ENCODE measurements at regions of chr9 and their contacts with region 1.

Region 1: DNA sequence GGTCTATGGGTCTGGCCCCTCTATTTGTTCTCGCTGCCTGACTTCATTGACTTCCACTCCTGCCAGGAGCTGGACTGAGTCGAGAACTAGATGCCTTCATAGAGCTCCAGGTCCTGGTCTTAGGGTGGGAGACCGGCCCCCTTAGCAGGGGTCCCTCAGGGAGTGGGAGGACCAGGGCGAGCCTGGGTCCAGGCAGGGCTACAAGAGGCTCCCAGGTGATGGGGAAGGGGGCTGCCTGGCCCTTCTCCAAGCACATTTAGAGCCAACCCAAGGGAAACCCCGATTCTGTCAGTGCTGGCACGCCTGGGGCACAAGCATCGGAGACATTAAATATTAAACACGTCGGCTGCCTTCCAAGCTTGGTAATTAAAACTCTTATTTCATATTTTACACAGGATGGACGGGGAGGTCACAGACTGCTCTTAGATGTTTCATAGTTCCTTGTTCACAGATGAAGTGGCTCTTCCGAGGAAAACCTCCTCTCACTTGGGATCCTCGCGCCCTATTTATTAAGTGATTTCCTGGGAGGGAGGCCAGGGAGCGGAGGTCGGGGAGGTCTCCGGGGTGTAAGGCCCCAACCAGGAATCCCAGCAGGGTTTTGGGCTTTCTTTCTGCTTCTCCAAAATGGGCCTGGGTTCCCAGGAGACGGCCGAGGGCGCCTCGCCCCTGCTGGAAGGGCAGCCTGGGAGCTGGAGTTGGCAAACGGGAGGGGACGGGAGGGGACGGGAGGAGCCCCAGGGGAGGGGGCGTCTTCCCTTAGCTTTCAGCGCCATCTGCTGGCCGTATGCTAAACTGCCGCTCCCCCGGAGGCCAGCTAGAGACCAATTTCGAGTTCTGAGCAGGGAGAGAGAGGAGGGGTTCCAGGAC is 23.4 kb upstream of the ZBTB43 start:
- DNase-seq: peak; percentile 90
- H3K4me3 ChIP-seq: peak overlapping the region in 2 of 4 donors; percentile 14 to 22
- H3K27ac ChIP-seq: no peak overlapping the region
- H3K4me1 ChIP-seq: peaks cover 0 to 6% (median 2%) of the 10 kb centered on the region in 4 donors
- H3K27me3 ChIP-seq: peaks cover 0 to 40% (median 9%) of the 10 kb centered on the region in 3 donors
- CTCF ChIP-seq: peak; percentile 78 to 96 (median 89)
- EP300 ChIP-seq: no peak
- POLR2A ChIP-seq: no peak

Region 2: DNA sequence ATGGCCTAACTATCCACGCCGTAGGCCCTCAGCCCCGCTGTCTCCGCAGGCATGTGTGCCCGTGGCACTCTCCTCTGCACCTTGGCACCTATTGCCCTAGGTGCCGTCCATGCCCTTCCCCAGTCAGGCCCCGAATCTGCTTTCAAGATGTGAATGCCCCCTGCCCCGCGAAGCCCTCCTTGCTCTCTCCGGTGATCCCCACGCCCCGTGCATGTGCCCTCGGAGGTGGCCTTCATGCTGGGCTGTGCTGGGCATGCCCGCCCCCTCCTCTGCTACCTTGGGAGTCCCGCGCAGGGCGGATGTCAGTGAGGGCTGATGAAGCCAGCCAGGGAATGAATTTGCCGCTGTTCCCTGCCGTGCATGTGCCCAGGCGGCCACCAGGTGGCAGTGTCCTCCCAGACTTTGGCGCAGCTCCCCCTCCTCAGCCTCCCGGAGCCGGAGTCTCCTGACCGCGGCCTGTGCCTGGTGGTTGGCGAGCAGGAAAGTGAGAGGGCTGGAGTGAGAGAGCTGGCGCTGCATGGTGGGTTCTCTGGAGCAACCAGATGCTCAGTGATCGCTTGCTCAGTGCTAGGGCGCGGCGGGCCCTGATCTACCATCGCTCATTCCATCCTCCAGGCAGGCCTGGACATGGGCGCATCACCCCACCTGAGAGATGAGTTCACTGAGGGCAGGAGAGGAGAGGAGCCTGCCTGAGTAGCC is 280.6 kb before region 1 on chr9:
- intact Hi-C with region 1: loop called (anchors 5 kb)
- DNase-seq: peak; percentile 89
- H3K4me3 ChIP-seq: no peak overlapping the region
- H3K27ac ChIP-seq: no peak overlapping the region
- H3K4me1 ChIP-seq: peaks cover 0 to 26% (median 23%) of the 10 kb centered on the region in 4 donors
- H3K27me3 ChIP-seq: no peaks in the 10 kb centered on the region
- CTCF ChIP-seq: peak; percentile 79 to 93 (median 85)
- EP300 ChIP-seq: no peak
- POLR2A ChIP-seq: no peak

Region 3: GRCh38 chr9:126611592-126612325 is 169.7 kb before region 1 on chr9:
- intact Hi-C with region 1: loop called (anchors 5 kb)
- DNase-seq: peak; percentile 75
- H3K4me3 ChIP-seq: peak overlapping the region in 3 of 4 donors; percentile 33 to 41 (median 35)
- H3K27ac ChIP-seq: no peak overlapping the region
- H3K4me1 ChIP-seq: peaks cover 0 to 54% (median 50%) of the 10 kb centered on the region in 4 donors
- H3K27me3 ChIP-seq: peaks cover 51 to 87% (median 74%) of the 10 kb centered on the region in 3 donors
- CTCF ChIP-seq: peak; percentile 63 to 86 (median 70)
- EP300 ChIP-seq: no peak
- POLR2A ChIP-seq: no peak

Region 4: GRCh38 chr9:126626127-126626925 is 155.1 kb before region 1 on chr9:
- intact Hi-C with region 1: no loop called
- DNase-seq: no peak
- H3K4me3 ChIP-seq: peak overlapping the region in 3 of 4 donors; percentile 13 to 41 (median 38)
- H3K27ac ChIP-seq: no peak overlapping the region
- H3K4me1 ChIP-seq: peaks cover 0 to 35% (median 30%) of the 10 kb centered on the region in 4 donors
- H3K27me3 ChIP-seq: peaks cover 68 to 100% (median 93%) of the 10 kb centered on the region in 3 donors
- CTCF ChIP-seq: no peak
- EP300 ChIP-seq: no peak
- POLR2A ChIP-seq: no peak

Region 5: DNA sequence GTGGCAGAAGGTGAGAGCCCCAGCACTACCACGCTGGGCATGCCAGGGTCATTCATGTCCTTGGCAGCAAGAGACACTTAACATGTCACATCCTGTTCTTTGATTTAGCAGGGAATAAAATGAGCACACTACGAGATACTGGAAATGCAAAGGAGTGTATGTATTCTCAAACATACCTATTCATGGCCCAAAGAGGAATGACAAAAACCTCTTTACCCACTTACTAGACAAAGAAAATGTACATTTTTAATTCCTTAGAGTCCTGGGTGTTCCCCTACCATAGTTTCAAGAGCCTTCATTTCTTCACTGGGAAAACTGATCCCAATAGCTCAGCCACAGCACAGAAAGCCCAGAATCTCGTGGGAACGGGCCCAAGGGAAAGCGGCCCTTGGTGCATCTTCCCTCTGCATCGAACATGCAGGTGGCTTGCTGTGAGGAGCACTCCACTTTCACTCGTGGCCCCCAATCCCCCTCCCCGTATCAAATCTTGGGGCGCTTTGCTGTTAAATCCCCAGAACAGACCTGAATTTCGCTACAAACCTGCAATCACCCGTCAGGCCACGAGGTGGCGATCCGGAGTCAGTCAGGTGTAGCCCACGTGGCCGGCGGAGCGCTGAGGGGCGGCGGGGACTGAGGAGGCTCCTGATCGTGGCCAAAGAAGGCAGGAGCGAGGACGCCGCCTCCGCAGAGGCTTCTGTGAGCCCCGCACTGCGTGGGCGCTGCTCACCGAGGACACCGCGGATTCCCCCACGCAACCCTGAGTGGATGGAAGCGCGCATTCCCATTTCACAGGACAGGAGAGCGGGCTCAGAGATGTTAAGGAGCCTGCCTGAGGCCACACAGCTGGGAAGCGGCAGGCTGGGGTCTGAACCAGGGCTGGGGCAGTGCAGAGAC is 76.3 kb before region 1 on chr9:
- intact Hi-C with region 1: loop called (anchors 1 kb)
- DNase-seq: peak; percentile 88
- H3K4me3 ChIP-seq: peak overlapping the region in 2 of 4 donors; percentile 23 to 38
- H3K27ac ChIP-seq: no peak overlapping the region
- H3K4me1 ChIP-seq: peaks cover 0 to 18% (median 16%) of the 10 kb centered on the region in 4 donors
- H3K27me3 ChIP-seq: peaks cover 5 to 68% (median 34%) of the 10 kb centered on the region in 3 donors
- CTCF ChIP-seq: peak; percentile 87 to 97 (median 92)
- EP300 ChIP-seq: no peak
- POLR2A ChIP-seq: no peak

Region 6: DNA sequence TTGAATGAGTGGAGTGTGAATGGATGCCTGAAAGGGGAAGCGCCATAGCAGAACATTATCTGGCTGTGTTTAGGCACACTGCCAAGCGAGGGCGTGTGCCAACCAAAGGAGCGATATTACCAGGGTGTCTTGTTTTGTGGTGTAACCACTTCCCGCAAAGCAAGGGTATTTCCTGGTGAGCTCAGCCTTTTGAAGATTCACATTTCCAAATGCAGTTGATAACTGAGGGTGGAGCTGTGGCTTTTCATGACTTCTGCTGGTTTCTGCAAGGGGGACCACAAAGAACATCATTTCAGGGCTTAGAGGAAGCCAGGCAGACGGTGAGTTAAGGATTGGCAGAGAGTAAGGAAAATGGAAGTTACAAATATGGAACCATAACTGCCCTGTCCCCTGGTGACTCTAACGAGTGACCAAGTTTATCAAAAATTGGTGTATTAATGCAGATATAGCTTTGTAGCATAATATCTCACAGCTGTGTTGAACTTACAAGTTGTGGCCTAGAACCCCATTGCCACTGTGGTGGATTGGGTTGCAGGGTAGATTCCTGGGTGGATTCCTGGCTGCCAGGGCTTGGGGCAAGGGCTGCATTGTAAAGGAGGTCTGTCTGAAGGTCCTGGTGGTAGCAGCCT is 204.6 kb after region 1 on chr9:
- intact Hi-C with region 1: no loop called
- DNase-seq: no peak
- H3K4me3 ChIP-seq: no peak overlapping the region
- H3K27ac ChIP-seq: peak overlapping the region in 1 of 4 donors; percentile 10
- H3K4me1 ChIP-seq: peaks cover 0 to 37% (median 11%) of the 10 kb centered on the region in 4 donors
- H3K27me3 ChIP-seq: no peaks in the 10 kb centered on the region
- CTCF ChIP-seq: no peak
- EP300 ChIP-seq: no peak
- POLR2A ChIP-seq: no peak

Measured in sigmoid colon (tissue), 7 donors.